ENCODE measurements at regions of chr5 and their contacts with region 1.

Region 1: GRCh38 chr5:64318175-64318574 is 152.5 kb downstream of the RNF180 start:
- DNase-seq: peak; percentile 38
- ATAC-seq: peak; percentile 84
- H3K4me3 ChIP-seq: no peak overlapping the region
- H3K27ac ChIP-seq: no peak overlapping the region
- H3K4me1 ChIP-seq: peaks cover 5% of the 10 kb centered on the region; the same call in 1 of the 2 replicates
- H3K27me3 ChIP-seq: no peaks in the 10 kb centered on the region
- CTCF ChIP-seq: no peak

Region 2: GRCh38 chr5:64299805-64300204 is 18.4 kb before region 1 on chr5:
- CTCF ChIA-PET with region 1: no interaction called
- POLR2A ChIA-PET with region 1: no interaction called
- intact Hi-C with region 1: loop called (anchors 2 kb)
- DNase-seq: peak; percentile 90
- ATAC-seq: peak; percentile 98
- H3K4me3 ChIP-seq: peak overlapping the region; percentile 29; the same call in 1 of the 2 replicates
- H3K27ac ChIP-seq: peak overlapping the region; percentile 92
- H3K4me1 ChIP-seq: peaks cover 41% of the 10 kb centered on the region
- H3K27me3 ChIP-seq: no peaks in the 10 kb centered on the region
- CTCF ChIP-seq: no peak

Region 3: DNA sequence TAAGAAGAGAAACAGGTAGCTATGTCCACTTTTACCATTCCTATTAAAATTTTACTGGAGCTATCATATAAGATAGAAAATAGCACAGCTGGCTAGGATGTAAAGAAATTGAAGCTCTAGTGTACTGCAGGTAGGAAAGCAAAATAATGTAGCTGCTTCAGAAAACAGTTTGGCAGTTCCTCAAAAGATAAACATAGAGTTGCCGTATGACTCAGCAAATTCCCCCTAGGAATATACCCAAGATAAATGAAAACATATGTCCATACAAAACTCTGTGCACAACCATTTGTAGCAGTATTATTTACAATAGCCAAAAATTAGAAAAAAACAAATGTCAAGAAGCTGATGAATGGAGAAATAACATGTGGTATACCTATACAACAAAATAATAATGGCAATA is 307.5 kb after region 1 on chr5:
- CTCF ChIA-PET with region 1: no interaction called
- POLR2A ChIA-PET with region 1: no interaction called
- intact Hi-C with region 1: no loop called
- DNase-seq: no peak
- ATAC-seq: no peak
- H3K4me3 ChIP-seq: no peak overlapping the region
- H3K27ac ChIP-seq: no peak overlapping the region
- H3K4me1 ChIP-seq: no peaks in the 10 kb centered on the region; the same call in 1 of the 2 replicates
- H3K27me3 ChIP-seq: no peaks in the 10 kb centered on the region
- CTCF ChIP-seq: no peak

Measured in PC-3 (cell line).